Body of pancreas (tissue), 4 donors: ENCODE measurements at regions of chr7 and their contacts with region 1.

Region 1: GRCh38 chr7:91034459-91035368 is 229.5 kb upstream of the FZD1 start:
- DNase-seq: peak; percentile 83 to 85 (median 84)
- ATAC-seq: peak; percentile 94
- H3K4me3 ChIP-seq: no peak overlapping the region
- H3K27ac ChIP-seq: peak overlapping the region in 1 of 4 donors; percentile 1
- H3K4me1 ChIP-seq: peaks cover 19% of the 10 kb centered on the region
- H3K27me3 ChIP-seq: no peaks in the 10 kb centered on the region
- CTCF ChIP-seq: peak; percentile 47 to 89 (median 80)
- POLR2A ChIP-seq: no peak

Region 2: DNA sequence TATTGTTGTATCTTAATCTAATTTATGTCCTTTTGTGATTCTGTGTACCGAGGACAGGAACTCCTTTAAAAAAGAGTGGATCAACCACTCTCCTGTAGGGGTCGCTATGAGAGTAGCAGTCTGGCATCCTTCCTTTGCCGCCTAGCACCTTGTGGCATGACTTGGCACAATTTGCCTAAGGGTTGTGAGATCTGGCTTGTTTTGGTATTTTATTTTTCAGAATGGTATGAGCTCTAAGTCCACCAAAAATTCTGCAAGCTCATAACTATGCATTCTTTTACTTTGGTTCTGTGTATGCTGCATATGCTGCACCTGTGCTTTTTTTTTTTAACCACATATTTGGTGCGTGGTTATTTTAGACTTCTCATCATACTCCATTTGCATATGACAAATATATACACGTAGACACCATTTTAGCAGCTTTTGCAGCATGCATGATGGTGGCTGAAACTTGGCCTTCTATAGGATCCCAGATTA is 325.8 kb before region 1 on chr7:
- intact Hi-C with region 1: loop called (anchors 5 kb)
- DNase-seq: peak; percentile 74 to 83 (median 80)
- ATAC-seq: peak; percentile 91
- H3K4me3 ChIP-seq: no peak overlapping the region
- H3K27ac ChIP-seq: peak overlapping the region in 3 of 4 donors; percentile 60 to 90 (median 76)
- H3K4me1 ChIP-seq: peaks cover 50% of the 10 kb centered on the region
- H3K27me3 ChIP-seq: no peaks in the 10 kb centered on the region
- CTCF ChIP-seq: peak; percentile 51 to 96 (median 94)
- POLR2A ChIP-seq: no peak